Caco-2 (cell line): ENCODE measurements at regions of chr10 and their contacts with region 1.

Region 1: GRCh38 chr10:25113191-25114035 is 61.4 kb upstream of the GPR158 start:
- DNase-seq: peak; percentile 87 to 90
- H3K4me3 ChIP-seq: no peak overlapping the region
- H3K4me3 Mint-ChIP-seq: no peak overlapping the region
- H3K27ac Mint-ChIP-seq: no peak overlapping the region
- H3K4me1 ChIP-seq: peaks cover 6% of the 10 kb centered on the region
- H3K4me1 Mint-ChIP-seq: no peaks in the 10 kb centered on the region
- H3K27me3 ChIP-seq: no peaks in the 10 kb centered on the region
- H3K27me3 Mint-ChIP-seq: peaks cover 7% of the 10 kb centered on the region
- CTCF ChIP-seq: peak; percentile 94 to 95

Region 2: GRCh38 chr10:25174461-25175230 is 61.2 kb after region 1 on chr10 and contains the start of gene GPR158:
- CTCF ChIA-PET with region 1: interaction called, 7 read pairs
- POLR2A ChIA-PET with region 1: no interaction called
- intact Hi-C with region 1: loop called (anchors 1 kb)
- DNase-seq: peak; percentile 96 to 98
- H3K4me3 ChIP-seq: peak within 1 kb of the TSS; percentile 81
- H3K4me3 Mint-ChIP-seq: peak within 1 kb of the TSS; percentile 89
- H3K27ac Mint-ChIP-seq: no peak within 1 kb of the TSS
- H3K4me1 ChIP-seq: peaks cover 6% of the 10 kb centered on the region
- H3K4me1 Mint-ChIP-seq: no peaks in the 10 kb centered on the region
- H3K27me3 ChIP-seq: 0 out of 2 replicates have a peak, but pooled peaks cover 3% of the 10 kb centered on the region
- H3K27me3 Mint-ChIP-seq: peaks cover 19% of the 10 kb centered on the region
- CTCF ChIP-seq: no peak
- total RNA-seq, gene GPR158: 0.05 and 0.07 TPM in 2 replicates

Region 3: DNA sequence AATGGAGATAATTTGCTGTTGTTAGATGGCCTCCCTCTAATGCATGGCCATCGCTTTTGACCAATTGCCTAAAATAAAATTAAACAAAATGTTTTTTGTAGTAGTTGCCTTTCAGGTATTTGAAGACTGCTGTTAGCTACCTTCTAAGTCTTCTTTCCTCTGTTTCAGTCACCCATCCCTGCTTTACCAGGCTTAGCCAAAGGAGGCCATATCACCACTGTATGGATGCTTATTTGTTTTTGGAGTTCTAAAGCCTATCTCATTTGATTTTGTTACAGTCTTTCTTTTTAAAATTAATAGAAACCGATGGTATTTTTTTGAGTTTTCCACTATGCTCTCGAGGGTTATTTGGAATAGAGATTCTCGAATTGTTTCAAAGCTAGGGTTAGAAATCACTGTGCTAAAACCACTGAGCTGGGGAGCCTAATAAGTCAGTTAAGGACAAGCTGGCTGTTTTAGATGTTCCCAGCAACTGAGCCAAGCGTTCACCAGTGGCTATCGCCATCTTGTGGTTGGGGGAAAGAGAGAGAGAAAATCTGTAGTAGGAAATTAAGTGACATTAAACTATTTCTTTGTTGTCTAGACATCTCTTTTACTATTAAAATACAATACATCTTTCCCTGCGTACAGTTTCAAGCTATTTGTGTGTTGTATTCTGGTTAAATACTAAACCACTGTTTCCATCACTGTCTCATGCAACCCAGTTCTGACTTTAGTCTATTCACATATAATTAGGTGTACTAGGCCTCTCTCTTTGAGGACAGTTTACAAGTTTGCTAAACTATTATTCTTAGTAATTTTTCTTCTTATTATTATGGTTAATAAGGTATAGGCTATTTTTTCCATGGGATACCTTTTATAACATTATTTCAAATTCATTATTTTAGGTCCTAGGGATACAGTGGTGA is 113.6 kb after region 1 on chr10:
- CTCF ChIA-PET with region 1: interaction called, 38 read pairs
- POLR2A ChIA-PET with region 1: no interaction called
- intact Hi-C with region 1: loop called (anchors 1 kb)
- DNase-seq: peak; percentile 57 to 71
- H3K4me3 ChIP-seq: no peak overlapping the region
- H3K4me3 Mint-ChIP-seq: no peak overlapping the region
- H3K27ac Mint-ChIP-seq: no peak overlapping the region
- H3K4me1 ChIP-seq: no peaks in the 10 kb centered on the region
- H3K4me1 Mint-ChIP-seq: no peaks in the 10 kb centered on the region
- H3K27me3 ChIP-seq: no peaks in the 10 kb centered on the region
- H3K27me3 Mint-ChIP-seq: peaks cover 7% of the 10 kb centered on the region
- CTCF ChIP-seq: peak; percentile 90 to 91

Region 4: DNA sequence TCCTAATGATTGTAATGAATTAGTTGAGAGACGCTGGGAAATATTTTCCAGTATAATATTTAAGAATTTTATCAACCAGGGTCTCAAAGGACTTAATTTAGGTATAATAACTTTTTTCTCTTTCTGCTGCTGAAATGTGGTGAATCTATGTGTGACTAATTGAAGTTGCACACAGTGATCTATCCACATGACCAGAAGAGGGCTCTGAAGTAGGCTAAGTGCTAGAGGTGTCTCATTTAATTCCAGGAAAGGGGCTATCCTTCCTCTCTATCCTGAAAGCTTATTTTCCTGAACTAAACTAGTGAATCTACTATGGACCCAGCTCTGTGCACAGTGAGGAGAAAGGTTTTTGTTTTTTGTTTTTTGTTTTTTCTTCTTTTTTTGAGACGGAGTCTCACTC is 526.2 kb after region 1 on chr10:
- CTCF ChIA-PET with region 1: interaction called, 4 read pairs
- POLR2A ChIA-PET with region 1: no interaction called
- intact Hi-C with region 1: loop called (anchors 5 kb)
- DNase-seq: no peak
- H3K4me3 ChIP-seq: no peak overlapping the region
- H3K4me3 Mint-ChIP-seq: no peak overlapping the region
- H3K27ac Mint-ChIP-seq: no peak overlapping the region
- H3K4me1 ChIP-seq: no peaks in the 10 kb centered on the region
- H3K4me1 Mint-ChIP-seq: peaks cover 6% of the 10 kb centered on the region
- H3K27me3 ChIP-seq: no peaks in the 10 kb centered on the region
- H3K27me3 Mint-ChIP-seq: peaks cover 15% of the 10 kb centered on the region
- CTCF ChIP-seq: no peak

Region 5: GRCh38 chr10:25682203-25682851 is 568.9 kb after region 1 on chr10:
- CTCF ChIA-PET with region 1: interaction called, 5 read pairs
- POLR2A ChIA-PET with region 1: no interaction called
- intact Hi-C with region 1: loop called (anchors 1 kb)
- DNase-seq: peak in 1 of 2 experiments; percentile 26
- H3K4me3 ChIP-seq: no peak overlapping the region
- H3K4me3 Mint-ChIP-seq: no peak overlapping the region
- H3K27ac Mint-ChIP-seq: no peak overlapping the region
- H3K4me1 ChIP-seq: no peaks in the 10 kb centered on the region
- H3K4me1 Mint-ChIP-seq: no peaks in the 10 kb centered on the region
- H3K27me3 ChIP-seq: no peaks in the 10 kb centered on the region
- H3K27me3 Mint-ChIP-seq: peaks cover 9% of the 10 kb centered on the region
- CTCF ChIP-seq: peak in 1 of 2 experiments; percentile 52